GM12878 (cell line): ENCODE measurements at regions of chr2 and their contacts with region 1.

Region 1: DNA sequence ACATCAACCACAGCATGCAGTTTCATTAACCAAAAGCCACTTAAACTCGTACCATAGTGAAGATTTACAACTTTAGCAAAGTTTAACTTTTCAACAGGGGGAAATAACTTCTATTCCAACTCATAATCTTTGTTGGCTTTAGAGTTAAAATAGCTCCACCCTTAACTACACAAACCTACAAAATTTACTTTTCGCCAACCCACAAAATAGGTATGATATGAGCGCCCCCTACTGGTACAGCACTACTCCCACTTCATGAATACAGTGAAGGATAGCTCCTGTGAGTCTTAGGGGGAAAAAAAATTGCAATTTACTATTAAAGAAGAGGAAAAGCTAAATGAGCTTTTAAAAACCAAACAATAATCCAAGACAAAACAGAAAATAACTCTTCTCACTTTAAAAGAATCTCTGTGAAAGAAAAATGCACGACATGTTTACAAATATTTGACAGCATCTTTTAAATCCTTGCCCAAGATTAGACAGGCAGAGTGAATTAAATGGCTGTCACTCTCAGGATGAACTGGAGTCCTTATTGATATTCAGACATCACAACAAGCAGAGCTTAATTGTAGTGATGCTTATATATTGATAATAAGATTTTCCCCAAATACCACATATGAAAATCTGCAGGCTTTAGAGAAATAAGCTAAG is 32.2 kb downstream of the TMEFF2 start:
- DNase-seq: no peak
- ATAC-seq: peak; percentile 94
- H3K4me3 ChIP-seq: no peak overlapping the region
- H3K27ac ChIP-seq: no peak overlapping the region
- H3K4me1 ChIP-seq: no peaks in the 10 kb centered on the region
- H3K27me3 ChIP-seq: peaks cover 0 to 2% of the 10 kb centered on the region in 2 experiments; a peak in 1 of 4 replicates
- CTCF ChIP-seq: peak; percentile 80 to 89 (median 83)
- EP300 ChIP-seq: no peak
- POLR2A ChIP-seq: no peak
- RAD21 ChIP-seq: peak; percentile 97

Region 2: GRCh38 chr2:191555092-191555742 is 607.3 kb before region 1 on chr2:
- CTCF ChIA-PET with region 1: interaction called, 62 read pairs
- POLR2A ChIA-PET with region 1: no interaction called
- RAD21 ChIA-PET with region 1: interaction called, 34 read pairs
- SMC1A ChIA-PET with region 1: interaction called, 31 read pairs
- in situ Hi-C with region 1: loop called (anchors 5 kb)
- intact Hi-C with region 1: loop called (anchors 1 kb)
- DNase-seq: no peak
- ATAC-seq: peak; percentile 97
- H3K4me3 ChIP-seq: no peak overlapping the region
- H3K27ac ChIP-seq: no peak overlapping the region
- H3K4me1 ChIP-seq: no peaks in the 10 kb centered on the region
- H3K27me3 ChIP-seq: no peaks in the 10 kb centered on the region; a peak in 1 of 4 replicates
- CTCF ChIP-seq: peak; percentile 52 to 81 (median 72); a peak in 5 of 6 replicates
- EP300 ChIP-seq: no peak
- POLR2A ChIP-seq: no peak
- RAD21 ChIP-seq: peak; percentile 96

Region 3: GRCh38 chr2:191758518-191759507 is 403.7 kb before region 1 on chr2:
- CTCF ChIA-PET with region 1: interaction called, 41 read pairs
- POLR2A ChIA-PET with region 1: no interaction called
- RAD21 ChIA-PET with region 1: interaction called, 15 read pairs
- SMC1A ChIA-PET with region 1: interaction called, 20 read pairs
- in situ Hi-C with region 1: no loop called
- intact Hi-C with region 1: loop called (anchors 2 kb)
- DNase-seq: peak; percentile 55
- ATAC-seq: peak; percentile 100
- H3K4me3 ChIP-seq: no peak overlapping the region
- H3K27ac ChIP-seq: no peak overlapping the region
- H3K4me1 ChIP-seq: 0 out of 2 replicates have a peak, but pooled peaks cover 2% of the 10 kb centered on the region
- H3K27me3 ChIP-seq: no peaks in the 10 kb centered on the region
- CTCF ChIP-seq: peak; percentile 77 to 88 (median 83)
- EP300 ChIP-seq: no peak
- POLR2A ChIP-seq: no peak
- RAD21 ChIP-seq: peak; percentile 54; the same call in 1 of the 2 replicates

Region 4: DNA sequence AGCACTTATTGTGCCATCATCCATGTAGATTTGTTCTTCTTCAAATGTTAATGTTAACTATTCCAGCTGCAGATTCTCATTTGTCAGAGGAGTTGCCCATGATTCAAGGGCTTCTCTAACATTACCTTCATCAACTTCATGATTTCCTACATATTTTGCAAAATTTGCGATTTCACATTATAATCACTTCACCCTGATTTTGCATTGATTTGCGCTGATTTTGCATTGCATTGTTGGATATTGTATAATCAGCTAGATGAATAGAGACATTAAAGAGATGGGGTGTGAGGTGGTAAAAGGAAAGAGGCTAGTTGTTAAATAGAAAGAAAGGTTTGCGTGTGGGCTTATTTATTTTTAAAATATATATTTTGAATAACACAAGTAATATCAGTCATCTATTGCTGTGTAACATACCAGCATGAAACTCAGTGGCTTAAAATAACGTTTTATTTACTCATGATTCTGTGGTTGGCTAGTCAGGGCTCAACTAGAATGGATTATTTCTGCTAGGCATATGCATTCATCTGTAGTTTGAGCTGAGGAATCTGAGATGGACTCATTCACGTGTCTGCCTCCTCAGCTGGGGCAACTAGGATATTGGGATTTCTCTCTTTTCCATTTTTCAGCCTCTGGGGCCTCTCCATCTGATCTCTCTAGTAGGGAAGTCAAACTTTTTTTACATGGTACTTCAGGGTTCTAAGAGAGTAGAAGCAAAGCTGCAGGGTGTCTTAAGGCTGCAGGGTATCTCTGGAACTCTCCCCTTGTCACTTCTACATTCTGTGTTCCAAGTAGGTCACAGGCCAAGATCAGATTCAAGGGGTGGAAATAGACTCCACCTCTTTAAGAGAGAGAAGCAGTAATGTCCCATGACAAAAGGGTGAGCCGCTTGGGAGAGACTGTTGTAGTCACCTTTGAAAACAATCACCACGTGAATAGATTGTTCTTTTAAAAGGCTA is 313.5 kb before region 1 on chr2:
- CTCF ChIA-PET with region 1: interaction called, 11 read pairs
- POLR2A ChIA-PET with region 1: no interaction called
- RAD21 ChIA-PET with region 1: interaction called, 4 read pairs
- SMC1A ChIA-PET with region 1: interaction called, 4 read pairs
- in situ Hi-C with region 1: no loop called
- intact Hi-C with region 1: no loop called
- DNase-seq: no peak
- ATAC-seq: no peak
- H3K4me3 ChIP-seq: no peak overlapping the region
- H3K27ac ChIP-seq: no peak overlapping the region
- H3K4me1 ChIP-seq: no peaks in the 10 kb centered on the region
- H3K27me3 ChIP-seq: peaks cover 5 to 16% of the 10 kb centered on the region in 2 experiments
- CTCF ChIP-seq: no peak
- EP300 ChIP-seq: no peak
- POLR2A ChIP-seq: no peak
- RAD21 ChIP-seq: no peak

Region 5: GRCh38 chr2:191912764-191913163 is 249.8 kb before region 1 on chr2:
- CTCF ChIA-PET with region 1: interaction called, 13 read pairs
- POLR2A ChIA-PET with region 1: no interaction called
- RAD21 ChIA-PET with region 1: no interaction called
- SMC1A ChIA-PET with region 1: interaction called, 5 read pairs
- in situ Hi-C with region 1: no loop called
- intact Hi-C with region 1: no loop called
- DNase-seq: no peak
- ATAC-seq: no peak
- H3K4me3 ChIP-seq: no peak overlapping the region
- H3K27ac ChIP-seq: no peak overlapping the region
- H3K4me1 ChIP-seq: no peaks in the 10 kb centered on the region
- H3K27me3 ChIP-seq: peaks cover 0 to 4% of the 10 kb centered on the region in 2 experiments; a peak in 1 of 4 replicates
- CTCF ChIP-seq: no peak
- EP300 ChIP-seq: no peak
- POLR2A ChIP-seq: no peak
- RAD21 ChIP-seq: no peak

Region 6: DNA sequence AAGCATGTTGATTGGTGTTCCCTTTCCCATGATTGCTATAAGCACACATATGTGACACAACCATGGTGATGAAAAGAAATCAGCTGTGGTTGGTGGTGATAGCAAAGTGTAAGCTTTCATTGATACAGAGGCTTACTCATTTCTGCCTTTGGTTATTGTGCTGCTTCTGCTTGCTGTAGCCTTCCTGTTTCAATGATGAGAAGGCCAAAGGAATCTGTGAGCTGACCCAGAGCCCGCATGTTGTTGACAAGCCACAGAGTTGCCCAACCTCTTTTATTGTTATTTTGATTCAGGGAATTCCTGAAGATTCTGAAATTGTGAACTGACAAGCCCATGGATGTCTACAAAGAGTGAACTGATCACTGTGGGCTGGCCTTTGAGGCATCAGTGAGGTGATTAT is 132.2 kb before region 1 on chr2:
- CTCF ChIA-PET with region 1: interaction called, 10 read pairs
- POLR2A ChIA-PET with region 1: no interaction called
- RAD21 ChIA-PET with region 1: no interaction called
- SMC1A ChIA-PET with region 1: interaction called, 5 read pairs
- in situ Hi-C with region 1: no loop called
- intact Hi-C with region 1: no loop called
- DNase-seq: no peak
- ATAC-seq: peak; percentile 86
- H3K4me3 ChIP-seq: no peak overlapping the region
- H3K27ac ChIP-seq: no peak overlapping the region
- H3K4me1 ChIP-seq: no peaks in the 10 kb centered on the region
- H3K27me3 ChIP-seq: no peaks in the 10 kb centered on the region
- CTCF ChIP-seq: no peak
- EP300 ChIP-seq: no peak
- POLR2A ChIP-seq: no peak
- RAD21 ChIP-seq: no peak

Region 7: DNA sequence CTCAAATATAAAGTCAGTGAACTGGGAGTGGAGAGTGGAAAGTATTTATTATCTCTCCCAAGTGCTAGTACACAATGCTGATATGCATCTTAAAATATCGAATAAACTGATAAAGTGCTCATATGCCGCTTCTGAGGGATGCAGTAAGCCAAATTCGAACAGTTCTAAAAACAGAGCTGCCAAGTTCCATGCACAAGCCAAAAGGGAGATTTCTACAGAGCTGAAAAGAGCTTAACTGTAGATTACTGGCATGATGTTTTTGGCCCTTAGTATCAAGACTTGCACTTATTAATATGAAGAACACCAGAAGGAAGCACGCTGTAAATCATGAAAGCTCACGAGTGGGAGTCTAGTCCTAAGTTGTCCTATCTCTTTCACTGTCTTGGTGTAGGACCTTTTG is 24.3 kb after region 1 on chr2:
- CTCF ChIA-PET with region 1: interaction called, 10 read pairs
- POLR2A ChIA-PET with region 1: no interaction called
- RAD21 ChIA-PET with region 1: no interaction called
- SMC1A ChIA-PET with region 1: no interaction called
- in situ Hi-C with region 1: no loop called
- intact Hi-C with region 1: no loop called
- DNase-seq: no peak
- ATAC-seq: no peak
- H3K4me3 ChIP-seq: no peak overlapping the region
- H3K27ac ChIP-seq: no peak overlapping the region
- H3K4me1 ChIP-seq: no peaks in the 10 kb centered on the region
- H3K27me3 ChIP-seq: no peaks in the 10 kb centered on the region; a peak in 1 of 4 replicates
- CTCF ChIP-seq: no peak
- EP300 ChIP-seq: no peak
- POLR2A ChIP-seq: no peak
- RAD21 ChIP-seq: no peak

Region 8: GRCh38 chr2:192307530-192307929 is 145.0 kb after region 1 on chr2:
- CTCF ChIA-PET with region 1: no interaction called
- POLR2A ChIA-PET with region 1: no interaction called
- RAD21 ChIA-PET with region 1: no interaction called
- SMC1A ChIA-PET with region 1: no interaction called
- in situ Hi-C with region 1: no loop called
- intact Hi-C with region 1: no loop called
- DNase-seq: no peak
- ATAC-seq: no peak
- H3K4me3 ChIP-seq: no peak overlapping the region
- H3K27ac ChIP-seq: no peak overlapping the region
- H3K4me1 ChIP-seq: no peaks in the 10 kb centered on the region
- H3K27me3 ChIP-seq: no peaks in the 10 kb centered on the region
- CTCF ChIP-seq: no peak
- EP300 ChIP-seq: no peak
- POLR2A ChIP-seq: no peak
- RAD21 ChIP-seq: no peak